WTC11 (cell line): ENCODE measurements at regions of chr21 and their contacts with region 1.

Region 1: DNA sequence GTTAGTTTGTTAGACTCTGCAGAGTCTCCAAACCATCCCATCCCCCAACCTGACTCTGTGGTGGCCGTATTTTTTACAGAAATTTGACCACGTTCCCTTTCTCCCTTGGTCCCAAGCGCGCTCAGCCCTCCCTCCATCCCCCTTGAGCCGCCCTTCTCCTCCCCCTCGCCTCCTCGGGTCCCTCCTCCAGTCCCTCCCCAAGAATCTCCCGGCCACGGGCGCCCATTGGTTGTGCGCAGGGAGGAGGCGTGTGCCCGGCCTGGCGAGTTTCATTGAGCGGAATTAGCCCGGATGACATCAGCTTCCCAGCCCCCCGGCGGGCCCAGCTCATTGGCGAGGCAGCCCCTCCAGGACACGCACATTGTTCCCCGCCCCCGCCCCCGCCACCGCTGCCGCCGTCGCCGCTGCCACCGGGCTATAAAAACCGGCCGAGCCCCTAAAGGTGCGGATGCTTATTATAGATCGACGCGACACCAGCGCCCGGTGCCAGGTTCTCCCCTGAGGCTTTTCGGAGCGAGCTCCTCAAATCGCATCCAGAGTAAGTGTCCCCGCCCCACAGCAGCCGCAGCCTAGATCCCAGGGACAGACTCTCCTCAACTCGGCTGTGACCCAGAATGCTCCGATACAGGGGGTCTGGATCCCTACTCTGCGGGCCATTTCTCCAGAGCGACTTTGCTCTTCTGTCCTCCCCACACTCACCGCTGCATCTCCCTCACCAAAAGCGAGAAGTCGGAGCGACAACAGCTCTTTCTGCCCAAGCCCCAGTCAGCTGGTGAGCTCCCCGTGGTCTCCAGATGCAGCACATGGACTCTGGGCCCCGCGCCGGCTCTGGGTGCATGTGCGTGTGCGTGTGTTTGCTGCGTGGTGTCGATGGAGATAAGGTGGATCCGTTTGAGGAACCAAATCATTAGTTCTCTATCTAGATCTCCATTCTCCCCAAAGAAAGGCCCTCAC is at the start of gene OLIG2:
- DNase-seq: peak; percentile 95
- ATAC-seq: peak; percentile 87
- H3K4me3 Mint-ChIP-seq: peak within 1 kb of the TSS; percentile 73
- H3K27ac Mint-ChIP-seq: no peak within 1 kb of the TSS
- H3K4me1 Mint-ChIP-seq: peaks cover 60% of the 10 kb centered on the region
- H3K27me3 Mint-ChIP-seq: peaks cover 100% of the 10 kb centered on the region
- CTCF ChIP-seq: no peak
- total RNA-seq, gene OLIG2: 0.60 to 0.79 TPM (median 0.71 TPM) in 3 replicates

Region 2: DNA sequence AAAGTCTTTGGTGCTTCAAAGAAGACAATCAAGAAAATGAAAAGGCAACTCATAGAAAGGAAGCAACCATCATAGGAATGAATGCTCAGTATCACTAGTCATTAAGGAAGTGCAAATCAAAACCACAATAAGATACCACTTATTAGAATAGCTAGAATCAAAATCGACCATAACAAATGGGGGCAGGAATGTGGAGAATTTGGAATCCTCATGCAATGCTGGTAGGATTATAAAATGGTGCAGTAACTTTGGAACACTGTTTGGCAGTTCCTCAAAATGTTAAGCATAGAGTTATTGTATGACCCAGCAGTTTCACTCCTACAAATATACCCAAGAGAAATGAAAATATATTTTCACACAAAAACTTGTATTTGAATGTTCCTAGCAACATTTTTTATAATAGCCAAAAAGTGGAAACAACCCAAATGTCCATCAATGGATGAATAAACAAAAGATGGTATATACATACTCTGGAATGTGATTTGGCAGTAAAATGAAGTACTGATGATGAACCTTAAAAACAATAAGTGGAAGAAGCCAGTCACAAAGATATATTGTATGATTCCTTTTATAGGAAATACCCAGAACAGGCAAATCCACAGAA is 852.5 kb before region 1 on chr21:
- CTCF ChIA-PET with region 1: no interaction called
- POLR2A ChIA-PET with region 1: no interaction called
- DNase-seq: no peak
- ATAC-seq: no peak
- H3K4me3 Mint-ChIP-seq: no peak overlapping the region
- H3K27ac Mint-ChIP-seq: no peak overlapping the region
- H3K4me1 Mint-ChIP-seq: no peaks in the 10 kb centered on the region
- H3K27me3 Mint-ChIP-seq: no peaks in the 10 kb centered on the region
- CTCF ChIP-seq: no peak

Region 3: DNA sequence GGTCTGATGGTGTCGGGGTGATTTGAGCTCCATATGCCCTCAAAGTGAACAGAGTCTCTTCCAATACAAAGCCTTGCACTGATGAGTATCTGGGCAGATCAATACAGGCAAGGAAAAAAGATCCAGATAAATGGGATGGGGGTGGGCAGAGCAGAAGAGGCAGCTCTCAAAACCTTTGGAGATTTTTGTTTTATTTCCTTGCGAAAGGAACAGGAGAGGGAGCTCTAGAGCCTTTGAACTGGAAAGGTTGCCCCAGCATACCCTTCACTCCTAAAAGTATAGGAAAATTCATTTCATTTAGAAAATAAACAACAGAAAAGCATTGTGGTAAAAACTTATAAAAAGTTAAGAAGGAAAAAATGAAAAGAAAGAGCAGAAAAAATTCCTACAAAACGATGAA is 31.5 kb before region 1 on chr21:
- CTCF ChIA-PET with region 1: interaction called, 20 read pairs
- POLR2A ChIA-PET with region 1: no interaction called
- DNase-seq: no peak
- ATAC-seq: peak; percentile 56
- H3K4me3 Mint-ChIP-seq: no peak overlapping the region
- H3K27ac Mint-ChIP-seq: no peak overlapping the region
- H3K4me1 Mint-ChIP-seq: peaks cover 8% of the 10 kb centered on the region
- H3K27me3 Mint-ChIP-seq: no peaks in the 10 kb centered on the region; the same call in 1 of the 2 replicates
- CTCF ChIP-seq: no peak

Region 4: DNA sequence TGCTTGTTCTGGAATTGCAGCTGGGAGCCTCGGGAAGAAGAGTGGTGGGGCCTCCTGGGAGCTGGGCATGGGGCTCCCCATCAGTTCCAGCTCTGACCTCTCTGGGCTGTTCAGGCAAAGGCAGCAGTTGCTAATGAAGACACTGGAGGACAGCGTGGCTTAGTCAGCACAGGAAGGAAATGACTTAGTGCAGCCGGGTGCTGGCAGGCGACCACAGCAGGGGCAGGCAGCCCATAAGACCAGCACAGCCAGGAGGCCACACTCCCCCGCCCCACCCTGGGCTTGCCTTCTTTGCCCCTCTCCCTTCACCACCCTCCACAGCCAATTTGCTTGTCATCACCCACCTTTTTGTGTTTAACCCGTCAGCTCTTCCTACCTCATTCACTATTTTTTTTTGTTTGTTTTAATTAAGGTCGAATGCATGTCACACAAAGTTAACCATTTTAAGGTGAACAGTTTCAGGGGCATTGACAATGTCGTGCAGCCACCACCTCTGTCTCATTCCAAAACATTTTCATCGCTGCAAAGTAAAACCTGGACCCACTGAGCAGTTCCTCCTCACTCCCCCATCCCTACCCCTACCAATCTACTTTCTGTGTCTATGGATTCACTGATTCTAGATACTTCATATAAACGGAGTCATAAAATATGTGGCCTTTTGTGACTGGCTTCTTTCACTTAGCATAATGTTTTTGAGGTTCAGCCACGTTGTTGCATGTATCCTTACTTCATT is 10.8 kb after region 1 on chr21:
- CTCF ChIA-PET with region 1: interaction called, 12 read pairs
- POLR2A ChIA-PET with region 1: interaction called, 3 read pairs
- DNase-seq: no peak
- ATAC-seq: peak; percentile 13
- H3K4me3 Mint-ChIP-seq: no peak overlapping the region
- H3K27ac Mint-ChIP-seq: no peak overlapping the region
- H3K4me1 Mint-ChIP-seq: peaks cover 41% of the 10 kb centered on the region
- H3K27me3 Mint-ChIP-seq: peaks cover 77% of the 10 kb centered on the region
- CTCF ChIP-seq: no peak

Region 5: GRCh38 chr21:33069976-33070811 is 44.4 kb after region 1 on chr21 and contains the start of gene OLIG1:
- CTCF ChIA-PET with region 1: interaction called, 14 read pairs
- POLR2A ChIA-PET with region 1: interaction called, 4 read pairs
- DNase-seq: peak; percentile 82
- ATAC-seq: peak; percentile 79
- H3K4me3 Mint-ChIP-seq: peak within 1 kb of the TSS; percentile 70
- H3K27ac Mint-ChIP-seq: no peak within 1 kb of the TSS
- H3K4me1 Mint-ChIP-seq: peaks cover 42% of the 10 kb centered on the region
- H3K27me3 Mint-ChIP-seq: peaks cover 89% of the 10 kb centered on the region
- CTCF ChIP-seq: no peak
- total RNA-seq, gene OLIG1: 2.1 to 2.4 TPM (median 2.2 TPM) in 3 replicates